Activated CD4-positive, alpha-beta T cell treated with anti-CD3 and anti-CD28 coated beads, Interleukin-2, amount 10 ng/mL, durations not matched to agents 7 days and 5 days (primary cell): ENCODE measurements at regions of chr6 and their contacts with region 1.

Region 1: GRCh38 chr6:53492860-53493634 is 51.9 kb downstream of the GCLC start:
- DNase-seq: no peak
- H3K4me3 Mint-ChIP-seq: no peak overlapping the region
- H3K27ac Mint-ChIP-seq: no peak overlapping the region
- H3K4me1 Mint-ChIP-seq: peaks cover 5% of the 10 kb centered on the region
- H3K27me3 Mint-ChIP-seq: peaks cover 18% of the 10 kb centered on the region

Region 2: DNA sequence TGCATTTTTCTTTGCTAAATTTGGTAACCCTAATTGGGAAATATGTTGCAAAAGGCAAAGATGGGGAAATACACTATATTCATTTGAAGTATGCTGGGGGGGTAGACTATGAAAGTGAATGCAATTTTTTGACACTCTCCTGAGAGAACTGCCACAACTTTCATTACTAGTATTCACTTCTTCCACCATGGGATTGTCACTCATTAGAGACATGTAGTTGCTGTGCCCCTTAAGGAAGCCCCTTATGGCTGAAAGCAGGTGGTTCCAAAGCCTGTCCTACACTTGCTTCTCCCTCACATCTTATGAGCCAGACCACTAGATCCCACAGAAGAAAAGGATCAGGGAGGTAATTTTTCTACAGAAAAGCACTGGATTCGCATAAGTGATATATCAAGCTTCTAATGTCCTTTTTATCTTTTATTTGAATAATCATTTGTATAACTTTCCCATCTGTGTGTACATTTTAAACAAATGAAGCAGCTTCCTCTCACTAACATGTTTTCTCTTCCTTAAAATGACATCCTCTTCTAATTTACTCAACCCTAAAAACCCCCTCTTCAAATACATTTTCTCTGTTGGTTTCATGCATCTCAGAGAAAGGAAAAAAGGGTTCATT is 31.9 kb before region 1 on chr6:
- CTCF ChIA-PET with region 1: no interaction called
- POLR2A ChIA-PET with region 1: no interaction called
- DNase-seq: no peak
- H3K4me3 Mint-ChIP-seq: no peak overlapping the region
- H3K27ac Mint-ChIP-seq: no peak overlapping the region
- H3K4me1 Mint-ChIP-seq: no peaks in the 10 kb centered on the region
- H3K27me3 Mint-ChIP-seq: no peaks in the 10 kb centered on the region

Region 3: DNA sequence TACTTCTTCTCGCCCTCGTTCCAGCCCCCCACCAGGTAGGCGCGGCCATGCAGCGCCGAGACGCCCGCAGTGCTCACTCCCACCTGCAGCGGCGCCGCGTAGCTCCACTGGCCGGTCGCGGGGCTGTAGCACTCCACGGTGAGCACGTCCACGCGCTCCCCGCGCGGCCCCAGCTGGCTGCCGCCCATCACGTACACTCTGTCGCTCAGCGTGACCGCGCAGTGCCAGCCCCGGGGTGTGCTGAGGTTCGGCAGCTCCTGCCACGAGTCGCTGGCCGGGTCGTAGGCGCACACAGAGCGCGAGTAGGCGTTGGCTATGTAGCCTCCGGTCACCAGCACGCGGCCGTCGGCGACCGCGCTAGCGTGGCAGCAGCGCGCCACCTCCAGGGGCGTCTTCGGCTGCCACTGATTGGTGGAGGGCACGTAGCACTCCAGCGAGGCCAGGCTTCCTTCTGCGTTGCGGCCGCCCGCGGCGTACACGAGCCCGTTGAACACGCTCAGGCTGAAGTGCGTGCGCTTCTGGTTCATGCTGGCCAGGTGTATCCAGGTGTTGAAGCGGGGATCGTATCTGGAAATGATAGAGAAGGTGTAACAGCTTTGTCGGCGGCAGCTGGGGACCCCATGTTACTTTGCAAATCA is 158.8 kb after region 1 on chr6:
- CTCF ChIA-PET with region 1: interaction called, 15 read pairs
- POLR2A ChIA-PET with region 1: no interaction called
- DNase-seq: peak; percentile 79
- H3K4me3 Mint-ChIP-seq: peak overlapping the region; percentile 85
- H3K27ac Mint-ChIP-seq: peak overlapping the region; percentile 91
- H3K4me1 Mint-ChIP-seq: peaks cover 33% of the 10 kb centered on the region
- H3K27me3 Mint-ChIP-seq: peaks cover 12% of the 10 kb centered on the region

Region 4: DNA sequence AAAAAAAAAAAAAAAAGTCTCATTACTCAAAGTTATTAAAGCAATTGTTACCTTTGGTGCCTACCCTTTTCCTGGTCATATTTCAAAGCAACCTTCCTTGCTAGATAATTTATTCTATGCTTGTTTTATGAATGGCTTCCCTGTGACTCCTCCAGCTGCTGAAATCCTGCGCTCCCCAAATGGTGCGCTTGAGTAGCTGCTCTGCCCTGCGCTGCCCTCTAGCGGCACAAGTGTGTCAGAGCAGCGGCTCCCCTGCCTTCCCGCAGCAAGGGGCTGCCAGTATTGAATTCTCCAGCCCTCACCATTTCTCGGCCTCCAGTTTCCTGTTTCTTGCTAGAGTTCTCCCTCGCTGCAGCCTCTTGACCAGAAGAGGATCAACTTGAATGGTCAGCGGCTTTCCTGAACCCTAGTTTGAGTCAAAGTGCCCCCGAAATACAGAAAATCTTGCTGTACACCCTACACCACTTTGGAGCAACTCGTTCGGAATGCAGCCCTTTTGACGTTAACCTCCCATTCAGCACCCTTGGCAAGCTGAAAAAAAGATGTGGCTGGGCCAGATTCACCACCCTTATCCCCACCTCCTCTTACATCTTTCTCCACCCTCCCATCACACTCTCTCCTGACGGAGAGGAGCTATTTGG is 232.9 kb after region 1 on chr6:
- CTCF ChIA-PET with region 1: interaction called, 13 read pairs
- POLR2A ChIA-PET with region 1: no interaction called
- DNase-seq: peak; percentile 71
- H3K4me3 Mint-ChIP-seq: no peak overlapping the region
- H3K27ac Mint-ChIP-seq: no peak overlapping the region
- H3K4me1 Mint-ChIP-seq: peaks cover 7% of the 10 kb centered on the region
- H3K27me3 Mint-ChIP-seq: peaks cover 12% of the 10 kb centered on the region